ENCODE measurements at regions of chr9 and their contacts with region 1.

Region 1: DNA sequence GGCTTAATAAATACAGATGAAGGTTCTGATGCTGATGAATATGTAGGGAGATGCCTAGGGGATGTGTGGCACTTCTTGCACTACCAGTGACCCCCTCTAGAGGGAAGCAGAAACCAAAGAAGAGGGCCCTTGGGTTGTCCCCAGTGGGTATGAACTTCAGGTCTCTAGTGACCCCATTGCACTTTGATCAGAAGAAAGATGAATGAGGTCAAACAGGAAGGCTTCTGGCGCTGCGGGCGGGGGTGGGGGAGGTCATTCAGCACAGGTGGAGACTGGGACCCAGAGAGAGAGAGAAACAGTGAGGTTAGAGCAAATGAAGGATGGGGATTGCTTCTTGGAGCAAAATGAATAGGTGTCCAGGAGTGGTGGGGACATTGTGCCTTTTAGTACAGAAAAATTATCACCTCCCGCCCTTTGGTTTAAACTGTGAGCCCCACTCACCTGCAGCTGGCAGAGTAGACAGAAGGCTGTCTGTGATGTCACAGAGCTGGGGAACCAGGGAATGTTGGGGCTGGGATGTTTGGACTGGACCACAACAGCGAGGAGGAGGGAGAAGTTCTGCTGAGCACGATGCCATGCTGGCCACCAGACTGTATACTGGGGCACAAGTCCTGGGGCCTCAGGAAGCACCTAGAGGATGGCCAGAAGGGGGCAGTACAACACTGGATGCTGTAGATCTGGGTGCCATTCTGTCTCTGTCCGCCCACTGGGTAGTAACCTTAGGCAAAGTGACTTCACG is at the start of gene TEX48:
- DNase-seq: peak; percentile 90
- H3K4me3 Mint-ChIP-seq: peak within 1 kb of the TSS; percentile 40
- H3K27ac Mint-ChIP-seq: peak within 1 kb of the TSS; percentile 76
- H3K4me1 Mint-ChIP-seq: peaks cover 50% of the 10 kb centered on the region
- H3K27me3 Mint-ChIP-seq: peaks cover 6% of the 10 kb centered on the region
- total RNA-seq, gene TEX48: 0.57 to 1.2 TPM

Region 2: GRCh38 chr9:114405294-114406034 is 276.3 kb before region 1 on chr9:
- CTCF ChIA-PET with region 1: interaction called, 11 read pairs
- POLR2A ChIA-PET with region 1: no interaction called
- intact Hi-C with region 1: no loop called
- DNase-seq: peak; percentile 87
- H3K4me3 Mint-ChIP-seq: no peak overlapping the region
- H3K27ac Mint-ChIP-seq: peak overlapping the region; percentile 3
- H3K4me1 Mint-ChIP-seq: peaks cover 4% of the 10 kb centered on the region
- H3K27me3 Mint-ChIP-seq: no peaks in the 10 kb centered on the region

Region 3: DNA sequence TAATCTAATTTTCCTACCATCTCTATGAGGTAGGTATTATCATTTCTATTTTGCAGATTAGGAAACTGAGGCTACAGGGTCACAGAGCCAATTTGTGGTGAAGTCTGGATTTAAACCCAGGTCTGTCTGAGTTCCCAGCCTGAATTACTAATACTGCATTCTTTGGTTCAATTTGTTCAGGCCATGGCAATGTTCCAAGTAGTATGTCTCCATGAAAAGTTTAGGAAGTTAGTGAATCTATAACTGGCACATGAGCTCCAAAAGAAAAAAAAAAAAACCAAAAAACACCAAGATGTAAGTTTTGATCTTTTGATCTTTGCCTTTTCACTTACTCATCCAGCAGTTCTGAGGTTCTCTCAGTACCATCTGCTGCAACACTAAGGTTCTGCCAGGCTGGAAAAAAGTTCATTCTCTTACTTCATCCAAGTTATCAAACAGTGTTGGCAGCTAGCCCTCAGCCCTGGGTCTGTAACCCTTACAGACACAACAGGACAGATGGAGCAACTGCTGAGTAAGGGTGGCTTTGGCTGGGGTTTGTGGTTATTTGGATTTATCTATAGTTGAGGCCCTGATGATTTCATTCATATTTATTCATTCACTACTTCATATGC is 75.1 kb before region 1 on chr9:
- CTCF ChIA-PET with region 1: no interaction called
- POLR2A ChIA-PET with region 1: no interaction called
- intact Hi-C with region 1: no loop called
- DNase-seq: no peak
- H3K4me3 Mint-ChIP-seq: no peak overlapping the region
- H3K27ac Mint-ChIP-seq: no peak overlapping the region
- H3K4me1 Mint-ChIP-seq: peaks cover 13% of the 10 kb centered on the region
- H3K27me3 Mint-ChIP-seq: no peaks in the 10 kb centered on the region

Region 4: GRCh38 chr9:114709636-114710035 is 27.9 kb after region 1 on chr9:
- CTCF ChIA-PET with region 1: interaction called, 14 read pairs
- POLR2A ChIA-PET with region 1: no interaction called
- intact Hi-C with region 1: no loop called
- DNase-seq: no peak
- H3K4me3 Mint-ChIP-seq: no peak overlapping the region
- H3K27ac Mint-ChIP-seq: peak overlapping the region; percentile 38
- H3K4me1 Mint-ChIP-seq: peaks cover 36% of the 10 kb centered on the region
- H3K27me3 Mint-ChIP-seq: no peaks in the 10 kb centered on the region

Region 5: DNA sequence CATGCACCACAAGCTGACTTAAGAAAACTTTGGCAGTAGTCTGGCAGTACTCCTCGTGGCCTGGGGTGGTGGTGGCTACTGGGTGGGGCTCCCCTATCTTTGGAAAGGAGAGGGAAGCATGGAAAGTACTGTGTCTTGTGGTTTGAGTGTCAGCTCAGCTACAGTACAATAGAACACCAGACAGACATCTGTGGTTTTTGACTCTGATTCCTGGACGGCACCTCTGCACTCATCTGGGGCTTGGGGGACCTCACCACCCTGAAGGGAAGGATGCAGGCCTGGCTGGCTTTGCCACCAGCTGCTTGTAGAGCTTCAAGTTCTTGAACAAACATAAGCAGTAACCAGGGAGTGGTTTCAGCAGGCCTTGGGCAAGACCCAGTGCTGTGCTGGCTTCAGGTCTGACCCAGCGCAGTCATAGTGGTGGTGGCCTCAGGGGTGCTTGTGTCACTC is 208.1 kb after region 1 on chr9:
- CTCF ChIA-PET with region 1: interaction called, 19 read pairs
- POLR2A ChIA-PET with region 1: no interaction called
- intact Hi-C with region 1: no loop called
- DNase-seq: peak; percentile 68
- H3K4me3 Mint-ChIP-seq: no peak overlapping the region
- H3K27ac Mint-ChIP-seq: peak overlapping the region; percentile 42
- H3K4me1 Mint-ChIP-seq: peaks cover 59% of the 10 kb centered on the region
- H3K27me3 Mint-ChIP-seq: no peaks in the 10 kb centered on the region

Region 6: DNA sequence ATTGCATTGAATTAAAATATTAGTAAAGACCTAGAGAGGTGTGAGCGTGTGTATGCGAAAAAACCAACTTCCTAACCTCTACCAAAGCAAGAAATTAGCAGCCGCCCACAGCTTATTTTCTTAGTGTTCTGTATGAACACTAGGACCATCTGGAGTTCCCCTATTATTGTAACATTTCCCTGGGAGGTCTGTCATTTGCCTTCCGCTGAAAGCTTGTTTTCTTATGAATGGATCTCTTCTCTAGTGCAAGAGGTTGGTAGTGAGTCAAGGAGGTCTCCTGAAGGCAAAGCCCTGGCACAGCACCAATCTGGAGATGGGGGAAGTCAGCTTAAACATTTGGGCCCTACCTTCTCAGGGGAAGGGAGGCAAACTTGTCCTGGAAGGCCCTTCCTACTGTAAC is 237.8 kb after region 1 on chr9:
- CTCF ChIA-PET with region 1: interaction called, 242 read pairs
- POLR2A ChIA-PET with region 1: interaction called, 3 read pairs
- intact Hi-C with region 1: no loop called
- DNase-seq: peak; percentile 68
- H3K4me3 Mint-ChIP-seq: peak overlapping the region; percentile 10
- H3K27ac Mint-ChIP-seq: peak overlapping the region; percentile 76
- H3K4me1 Mint-ChIP-seq: peaks cover 93% of the 10 kb centered on the region
- H3K27me3 Mint-ChIP-seq: no peaks in the 10 kb centered on the region

Region 7: DNA sequence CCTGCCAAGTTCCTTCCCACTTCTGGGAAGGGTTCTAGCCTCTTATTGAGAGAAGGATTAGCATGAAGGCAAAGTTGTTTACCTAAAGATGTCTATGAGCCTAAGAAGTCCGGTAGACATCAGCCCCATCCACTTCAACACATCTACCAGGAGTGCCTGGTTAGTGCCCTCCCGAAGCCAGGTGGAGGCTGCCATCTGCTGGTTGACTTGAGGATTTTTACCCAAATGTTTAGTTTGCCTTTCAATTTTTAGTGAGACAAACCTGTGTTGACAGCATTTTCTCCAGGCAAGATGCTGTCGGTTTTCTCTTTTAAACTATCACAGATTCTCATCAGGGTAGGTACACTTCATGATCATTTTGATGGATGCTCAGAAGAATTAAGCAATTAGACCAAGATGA is 332.2 kb after region 1 on chr9:
- CTCF ChIA-PET with region 1: interaction called, 118 read pairs
- POLR2A ChIA-PET with region 1: interaction called, 6 read pairs
- intact Hi-C with region 1: loop called (anchors 1 kb)
- DNase-seq: peak; percentile 88
- H3K4me3 Mint-ChIP-seq: no peak overlapping the region
- H3K27ac Mint-ChIP-seq: peak overlapping the region; percentile 34
- H3K4me1 Mint-ChIP-seq: peaks cover 47% of the 10 kb centered on the region
- H3K27me3 Mint-ChIP-seq: peaks cover 2% of the 10 kb centered on the region

Measured in activated CD4-positive, alpha-beta memory T cell treated with anti-CD3 and anti-CD28 coated beads for 36 hours (primary cell).